Activated CD8-positive, alpha-beta memory T cell treated with anti-CD3 and anti-CD28 coated beads, Interleukin-2, amount 10 ng/mL, durations not matched to agents 7 days and 5 days (primary cell): ENCODE measurements at regions of chr10 and their contacts with region 1.

Region 1: DNA sequence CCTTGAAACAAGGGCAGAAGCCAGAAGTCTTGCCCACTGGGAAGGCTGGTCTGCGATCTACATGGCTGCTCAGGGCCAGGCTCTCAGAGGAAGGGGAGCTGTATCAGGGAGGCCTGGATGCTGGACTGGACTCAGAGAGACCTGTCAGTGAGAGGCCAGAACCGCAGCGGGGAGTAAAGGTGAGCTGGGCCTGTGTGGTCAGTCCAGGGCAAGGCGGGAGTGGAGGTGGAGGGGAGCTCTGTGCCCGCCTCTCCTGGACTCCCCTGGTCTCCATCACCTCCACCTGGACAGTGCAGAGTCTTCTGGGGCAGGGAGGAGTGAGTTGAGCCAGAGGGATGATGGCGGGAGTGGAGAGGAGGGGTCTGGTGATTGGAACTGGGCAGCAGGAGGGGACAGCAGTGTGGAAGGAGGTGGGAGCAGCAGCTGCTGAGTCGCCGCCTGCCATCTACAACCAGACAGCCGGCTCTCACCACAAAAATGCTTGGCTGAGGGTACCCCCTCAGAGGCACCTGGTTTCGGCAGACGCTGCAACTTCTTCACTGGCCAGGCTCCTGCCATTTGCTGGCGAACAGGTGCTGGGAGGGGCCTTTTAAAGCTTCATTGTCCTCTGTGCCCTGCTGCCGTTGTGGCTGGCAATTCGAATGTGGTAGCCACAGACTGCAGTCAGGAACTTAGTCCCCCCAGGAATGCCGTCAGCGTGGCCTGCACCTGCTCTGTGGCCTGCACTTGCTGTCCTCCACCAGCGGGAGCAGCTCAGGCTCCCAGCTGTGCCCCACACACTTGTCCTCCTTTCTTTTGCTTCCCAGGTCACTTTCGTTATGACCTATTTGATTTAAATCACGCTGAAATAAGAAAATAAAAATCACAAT is 3.5 kb downstream of the RASSF4 start:
- DNase-seq: no peak
- ATAC-seq: no peak
- H3K4me3 Mint-ChIP-seq: no peak overlapping the region
- H3K27ac Mint-ChIP-seq: no peak overlapping the region
- H3K4me1 Mint-ChIP-seq: peaks cover 27% of the 10 kb centered on the region
- H3K27me3 Mint-ChIP-seq: no peaks in the 10 kb centered on the region

Region 2: GRCh38 chr10:44974628-44975431 is 11.7 kb after region 1 on chr10:
- CTCF ChIA-PET with region 1: interaction called, 11 read pairs
- DNase-seq: peak; percentile 74
- ATAC-seq: peak; percentile 98
- H3K4me3 Mint-ChIP-seq: peak overlapping the region; percentile 62
- H3K27ac Mint-ChIP-seq: peak overlapping the region; percentile 79
- H3K4me1 Mint-ChIP-seq: peaks cover 13% of the 10 kb centered on the region
- H3K27me3 Mint-ChIP-seq: no peaks in the 10 kb centered on the region

Region 3: GRCh38 chr10:45282061-45282460 is 319.0 kb after region 1 on chr10:
- CTCF ChIA-PET with region 1: no interaction called
- DNase-seq: no peak
- ATAC-seq: no peak
- H3K4me3 Mint-ChIP-seq: no peak overlapping the region
- H3K27ac Mint-ChIP-seq: no peak overlapping the region
- H3K4me1 Mint-ChIP-seq: no peaks in the 10 kb centered on the region
- H3K27me3 Mint-ChIP-seq: peaks cover 42% of the 10 kb centered on the region